ENCODE measurements at regions of chr11 and their contacts with region 1.

Region 1: DNA sequence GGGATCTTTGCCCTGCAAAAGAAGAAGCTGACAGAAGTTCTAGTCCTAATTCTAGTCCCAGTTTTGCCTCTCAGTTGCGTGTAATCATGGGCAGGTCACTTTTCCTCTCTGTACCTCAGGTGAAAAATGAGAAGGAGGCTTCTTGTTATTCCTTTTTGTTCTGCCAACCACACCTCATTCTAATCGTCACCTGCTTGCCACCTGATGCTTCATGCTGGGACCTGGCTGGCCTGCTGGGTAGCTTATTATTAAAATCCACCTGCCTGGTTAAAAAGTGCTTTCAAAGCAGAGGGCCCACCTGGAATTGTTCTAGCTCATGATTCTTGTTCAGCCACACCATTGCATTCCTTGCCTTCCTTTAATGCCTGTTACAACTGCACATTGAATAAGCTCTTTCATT is 8.4 kb upstream of the ALG8 start:
- DNase-seq: no peak
- ATAC-seq: no peak
- H3K4me3 Mint-ChIP-seq: no peak overlapping the region
- H3K27ac Mint-ChIP-seq: peak overlapping the region; percentile 25
- H3K4me1 Mint-ChIP-seq: peaks cover 8% of the 10 kb centered on the region
- H3K27me3 Mint-ChIP-seq: no peaks in the 10 kb centered on the region
- CTCF ChIP-seq: no peak

Region 2: DNA sequence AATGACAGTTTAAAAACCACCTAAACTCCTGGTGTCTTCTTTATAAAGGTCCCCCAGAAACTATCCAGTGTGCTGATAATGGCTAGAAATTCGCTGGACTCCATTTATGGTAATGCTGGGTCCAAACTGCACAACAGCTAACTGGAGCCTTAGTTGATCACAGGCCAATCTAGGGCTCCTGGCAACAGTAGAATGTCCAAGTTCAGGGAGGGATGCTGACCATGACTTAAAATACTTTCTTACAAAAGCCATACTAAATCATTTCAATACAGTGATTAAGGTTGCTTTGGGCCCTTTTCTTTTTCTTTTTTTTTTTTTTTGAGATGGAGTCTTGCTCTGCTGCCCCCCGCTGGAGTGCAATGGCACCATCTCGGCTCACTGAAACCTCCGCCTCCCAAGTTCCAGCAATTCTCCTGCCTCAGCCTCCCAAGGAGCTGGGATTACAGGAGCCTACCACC is 284.3 kb after region 1 on chr11:
- CTCF ChIA-PET with region 1: interaction called, 12 read pairs
- POLR2A ChIA-PET with region 1: no interaction called
- DNase-seq: peak; percentile 42
- ATAC-seq: peak; percentile 41; the same call in 1 of the 2 replicates
- H3K4me3 Mint-ChIP-seq: no peak overlapping the region
- H3K27ac Mint-ChIP-seq: no peak overlapping the region
- H3K4me1 Mint-ChIP-seq: peaks cover 14% of the 10 kb centered on the region
- H3K27me3 Mint-ChIP-seq: no peaks in the 10 kb centered on the region
- CTCF ChIP-seq: no peak